Uterus (tissue), 4 donors: ENCODE measurements at regions of chr9 and their contacts with region 1.

Region 1: DNA sequence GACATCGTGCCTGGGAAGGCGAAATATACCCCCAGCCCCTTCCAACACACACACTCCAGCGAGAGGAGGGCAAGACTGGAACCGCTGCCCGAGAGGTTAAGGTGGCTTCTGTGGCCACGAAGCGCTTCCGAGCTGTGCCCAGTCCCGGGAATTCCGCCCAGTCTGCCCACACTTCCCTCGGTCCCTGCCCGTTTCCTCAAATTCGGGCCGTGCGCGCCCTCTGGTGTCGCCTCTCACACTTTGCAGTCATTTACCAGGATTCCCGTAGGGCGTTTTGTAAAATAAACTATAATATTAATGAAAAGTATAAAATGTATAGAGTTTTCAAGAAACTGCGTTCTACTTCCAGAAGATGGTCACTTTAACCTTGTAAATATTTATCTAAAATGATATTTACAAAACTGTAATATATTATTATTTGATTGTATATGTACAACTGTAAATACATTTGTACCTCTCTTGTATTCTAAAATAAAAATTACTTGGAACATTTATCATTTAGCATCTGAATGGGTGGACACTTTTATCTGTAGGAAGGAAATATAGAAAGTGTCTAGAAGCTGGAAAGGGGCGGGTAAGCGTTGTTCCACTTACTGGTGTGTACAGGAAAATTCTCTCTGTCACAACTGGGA is 11.0 kb upstream of the EXOSC2 start:
- DNase-seq: peak; percentile 66 to 68
- H3K4me3 ChIP-seq: peak overlapping the region; percentile 15 to 50
- H3K27ac ChIP-seq: no peak overlapping the region
- H3K4me1 ChIP-seq: peaks cover 0 to 5% of the 10 kb centered on the region in 2 donors
- H3K27me3 ChIP-seq: no peaks in the 10 kb centered on the region
- CTCF ChIP-seq: peak; percentile 75 to 82 (median 78)
- POLR2A ChIP-seq: no peak

Region 2: DNA sequence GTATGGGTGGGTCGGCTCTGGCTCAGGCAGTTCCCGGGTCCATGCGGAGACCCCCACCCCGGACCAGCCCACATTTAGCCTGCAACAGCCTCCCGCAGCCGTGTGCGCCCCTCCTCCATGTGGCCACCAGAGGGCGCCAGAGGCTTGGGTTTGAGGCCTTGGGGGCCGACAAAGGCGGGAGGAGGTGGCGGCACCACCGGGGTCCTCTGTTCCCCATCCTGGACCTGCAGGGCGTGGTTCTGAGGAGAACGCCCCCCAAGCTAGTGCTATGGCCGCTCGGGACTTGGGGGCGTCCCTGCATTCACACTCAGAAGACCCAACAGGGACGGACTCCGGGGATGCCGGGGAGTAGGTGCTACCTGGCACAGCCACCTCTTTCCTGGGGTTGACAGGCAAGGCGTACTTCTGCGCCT is 221.4 kb before region 1 on chr9:
- intact Hi-C with region 1: loop called (anchors 5 kb)
- DNase-seq: peak; percentile 58 to 60
- H3K4me3 ChIP-seq: no peak overlapping the region
- H3K27ac ChIP-seq: no peak overlapping the region
- H3K4me1 ChIP-seq: no peaks in the 10 kb centered on the region
- H3K27me3 ChIP-seq: no peaks in the 10 kb centered on the region
- CTCF ChIP-seq: peak; percentile 88 to 92 (median 90)
- POLR2A ChIP-seq: no peak

Region 3: DNA sequence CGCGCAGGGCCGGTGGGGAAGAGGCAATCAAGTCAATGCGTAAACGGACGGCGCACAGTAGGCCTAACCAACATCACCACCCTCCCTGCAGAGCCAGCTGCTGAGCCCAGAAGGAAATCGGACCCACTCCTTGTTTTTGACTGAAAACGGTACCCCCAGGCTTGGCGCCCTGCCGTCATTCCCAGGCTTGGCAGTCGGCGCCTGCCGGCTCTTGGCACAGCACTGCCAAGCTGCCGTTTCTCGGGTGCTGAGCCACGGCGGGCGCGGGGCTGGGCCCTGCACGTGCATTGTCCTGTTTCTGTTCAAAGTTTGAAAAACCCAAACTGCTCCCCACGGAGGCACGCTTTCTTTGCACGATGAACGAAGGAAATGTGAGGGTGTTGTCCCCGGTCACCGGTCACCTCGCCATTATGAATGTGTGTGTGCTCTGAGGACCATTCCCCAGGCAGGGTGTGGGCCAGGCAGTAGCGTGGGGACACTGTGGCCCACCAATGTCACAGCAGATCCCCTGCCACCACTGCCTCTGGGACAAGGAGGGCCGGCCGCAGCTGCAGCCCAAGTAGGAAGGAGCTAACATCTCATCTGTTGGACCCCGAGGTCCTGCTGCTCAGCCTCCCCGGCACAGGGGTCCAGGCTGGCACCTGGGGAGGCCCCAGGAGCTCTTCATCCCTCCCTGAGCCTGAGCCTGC is 236.4 kb after region 1 on chr9:
- intact Hi-C with region 1: no loop called
- DNase-seq: no peak
- H3K4me3 ChIP-seq: no peak overlapping the region
- H3K27ac ChIP-seq: no peak overlapping the region
- H3K4me1 ChIP-seq: no peaks in the 10 kb centered on the region
- H3K27me3 ChIP-seq: no peaks in the 10 kb centered on the region
- CTCF ChIP-seq: no peak
- POLR2A ChIP-seq: no peak